Calu3 (cell line): ENCODE measurements at regions of chr12 and their contacts with region 1.

Region 1: DNA sequence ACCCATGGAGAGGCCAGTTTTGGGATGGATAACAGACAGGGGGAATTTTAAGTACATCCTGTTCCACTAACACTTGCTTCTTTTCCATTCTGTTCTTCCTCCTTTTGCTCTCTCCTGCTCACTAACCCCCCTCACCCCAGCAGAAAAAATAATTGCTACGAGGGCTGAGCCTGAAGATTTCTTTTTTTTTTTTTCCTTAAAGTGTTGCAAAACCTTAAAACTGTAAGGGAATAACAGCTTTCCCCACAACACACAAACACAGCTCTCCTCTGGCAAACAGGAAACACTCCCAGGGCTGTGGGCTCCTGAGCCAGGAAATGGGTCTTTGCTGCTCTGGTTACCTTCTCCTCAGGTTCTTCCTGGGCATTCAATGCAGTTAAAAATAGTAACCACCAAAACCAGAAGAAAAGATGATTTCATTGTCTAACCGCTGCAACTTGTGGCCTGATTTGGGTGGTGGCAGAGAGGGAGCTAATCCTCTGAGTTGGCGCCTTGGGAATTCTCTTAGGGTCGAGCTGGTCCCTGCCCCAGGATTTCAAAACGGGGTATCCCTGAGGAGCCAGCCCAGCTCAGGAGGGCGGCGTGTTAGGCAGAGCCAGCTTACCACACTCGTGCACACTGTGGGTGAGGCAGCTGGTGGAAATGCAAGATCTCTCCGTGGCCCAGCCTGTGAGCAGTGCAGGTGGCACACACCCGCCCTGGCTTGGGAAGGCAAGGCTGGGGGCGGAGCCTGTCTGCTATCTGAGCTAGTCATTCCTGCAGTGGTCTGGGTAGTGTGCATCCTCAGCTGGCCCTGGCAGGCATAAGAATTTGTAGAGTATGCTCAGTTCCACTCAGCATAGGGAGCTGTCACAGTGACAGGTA is 17.1 kb upstream of the EMP1 start:
- DNase-seq: peak; percentile 81
- H3K4me3 Mint-ChIP-seq: peak overlapping the region; percentile 1
- H3K27ac Mint-ChIP-seq: peak overlapping the region; percentile 3
- H3K4me1 Mint-ChIP-seq: peaks cover 57% of the 10 kb centered on the region
- H3K27me3 Mint-ChIP-seq: no peaks in the 10 kb centered on the region
- CTCF ChIP-seq: no peak

Region 2: DNA sequence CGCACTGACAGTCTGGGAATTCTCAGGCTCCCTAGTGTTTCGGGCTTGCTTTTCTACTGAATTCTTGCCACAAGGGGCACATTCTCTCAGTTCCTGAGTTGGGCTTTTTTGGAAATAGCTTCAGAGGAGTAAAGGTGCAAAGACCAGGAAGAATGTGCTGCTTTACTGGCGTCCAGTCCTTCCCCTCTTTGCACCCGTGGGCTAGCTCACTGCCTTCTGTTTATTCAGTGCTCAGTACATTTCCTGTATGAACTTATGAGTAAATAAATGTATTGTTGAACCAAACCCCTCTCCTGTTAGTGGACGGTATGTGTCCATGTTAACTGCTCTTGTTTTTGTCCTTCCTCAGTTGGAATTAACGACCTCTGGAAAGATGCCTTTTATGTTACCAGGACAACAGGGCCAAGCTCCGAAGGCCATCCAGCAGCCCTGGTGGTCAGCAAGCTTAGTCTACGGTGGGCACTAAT is 100.0 kb before region 1 on chr12:
- CTCF ChIA-PET with region 1: interaction called, 11 read pairs
- intact Hi-C with region 1: no loop called
- DNase-seq: no peak
- H3K4me3 Mint-ChIP-seq: no peak overlapping the region
- H3K27ac Mint-ChIP-seq: no peak overlapping the region
- H3K4me1 Mint-ChIP-seq: no peaks in the 10 kb centered on the region
- H3K27me3 Mint-ChIP-seq: peaks cover 12% of the 10 kb centered on the region
- CTCF ChIP-seq: no peak

Region 3: DNA sequence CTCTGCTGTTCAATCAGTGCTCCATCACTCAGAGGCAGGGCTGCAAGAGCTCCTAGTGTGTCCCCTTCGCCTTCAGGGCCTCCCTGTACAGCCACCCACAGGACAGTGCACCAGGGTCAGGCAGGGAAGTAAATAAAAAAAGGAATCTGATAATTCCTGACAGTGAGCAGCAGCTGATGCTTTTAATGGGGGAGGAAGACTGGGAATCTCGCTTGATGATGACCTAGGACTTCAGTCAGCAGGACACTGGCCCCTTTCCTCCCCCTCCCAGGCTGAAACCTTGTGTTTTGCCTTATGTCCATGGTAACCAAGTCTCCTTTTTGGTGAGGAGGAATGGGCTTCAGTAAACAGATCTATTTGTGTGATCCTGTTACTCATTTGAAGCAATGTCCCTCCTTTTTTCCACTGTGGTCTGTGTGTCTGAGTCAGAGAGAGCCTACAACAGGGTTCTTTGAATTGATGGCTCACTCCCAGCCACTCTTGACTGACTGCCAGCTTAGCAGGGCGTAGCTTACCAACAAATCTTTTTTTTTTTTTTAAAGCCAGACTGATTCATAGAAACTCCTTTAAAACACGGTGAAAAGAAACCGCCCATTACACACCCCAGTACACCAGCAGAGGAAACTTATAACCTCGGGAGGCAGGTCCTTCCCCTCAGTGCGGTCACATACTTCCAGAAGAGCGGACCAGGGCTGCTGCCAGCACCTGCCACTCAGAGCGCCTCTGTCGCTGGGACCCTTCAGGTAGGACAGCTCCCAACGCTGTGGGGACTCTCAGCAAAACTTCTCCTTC is 16.9 kb after region 1 on chr12 and contains the start of gene EMP1:
- CTCF ChIA-PET with region 1: interaction called, 10 read pairs
- intact Hi-C with region 1: no loop called
- DNase-seq: peak; percentile 88
- H3K4me3 Mint-ChIP-seq: peak within 1 kb of the TSS; percentile 76
- H3K27ac Mint-ChIP-seq: peak within 1 kb of the TSS; percentile 68
- H3K4me1 Mint-ChIP-seq: peaks cover 55% of the 10 kb centered on the region
- H3K27me3 Mint-ChIP-seq: no peaks in the 10 kb centered on the region
- CTCF ChIP-seq: no peak
- total RNA-seq, gene EMP1: 128 and 146 TPM in 2 replicates